KBM-7 (cell line): ENCODE measurements at regions of chr13 and their contacts with region 1.

Region 1: DNA sequence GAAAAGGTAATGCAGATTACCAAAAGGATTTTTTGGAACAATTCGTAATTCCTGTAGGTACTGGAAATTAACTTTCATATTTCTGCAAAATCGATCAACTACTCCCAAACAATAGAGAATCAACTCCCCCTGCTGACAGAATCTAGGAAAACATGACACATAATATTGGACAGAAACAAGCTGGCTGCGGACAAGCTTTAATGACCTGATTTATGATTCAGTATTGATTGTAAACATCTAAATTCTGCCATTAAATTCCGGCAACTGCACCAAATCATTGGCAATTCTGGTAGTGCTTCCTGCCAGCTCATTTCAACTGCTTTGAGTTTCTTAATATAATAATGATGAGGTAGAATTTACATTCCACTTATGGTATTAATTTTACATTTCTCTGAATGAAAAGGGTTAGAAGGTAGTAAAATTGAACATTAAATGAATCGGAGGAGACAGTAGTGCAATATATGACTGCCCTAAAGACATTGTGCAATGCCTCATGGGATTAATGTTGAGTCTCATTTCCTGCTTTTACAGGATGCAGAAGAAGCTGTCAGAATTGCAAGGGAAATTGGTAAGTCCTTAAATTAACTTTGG is 146.5 kb downstream of the PCCA start:
- DNase-seq: peak; percentile 59

Region 2: GRCh38 chr13:99916366-99917103 is 318.9 kb before region 1 on chr13:
- in situ Hi-C with region 1: loop called (anchors 25 kb)
- DNase-seq: peak; percentile 86

Region 3: DNA sequence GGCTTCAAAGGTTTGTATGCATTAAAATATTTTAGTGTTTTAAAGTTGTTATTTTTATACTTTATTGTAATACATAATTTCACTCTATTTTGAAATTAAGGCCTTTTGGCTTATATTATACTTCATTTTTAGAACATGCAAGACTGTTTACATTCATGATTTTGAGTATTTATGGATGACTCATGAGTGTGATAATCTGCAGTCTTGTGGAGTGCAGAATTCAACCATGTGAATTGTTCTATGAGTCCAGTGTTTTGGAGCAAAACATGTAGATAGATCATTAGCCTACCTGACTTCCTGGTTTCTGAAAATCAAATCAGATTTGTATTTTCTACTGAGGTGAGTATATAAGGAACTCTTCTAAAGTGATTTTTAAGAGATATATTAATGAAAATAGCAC is 95.3 kb after region 1 on chr13:
- in situ Hi-C with region 1: no loop called
- DNase-seq: no peak

Region 4: DNA sequence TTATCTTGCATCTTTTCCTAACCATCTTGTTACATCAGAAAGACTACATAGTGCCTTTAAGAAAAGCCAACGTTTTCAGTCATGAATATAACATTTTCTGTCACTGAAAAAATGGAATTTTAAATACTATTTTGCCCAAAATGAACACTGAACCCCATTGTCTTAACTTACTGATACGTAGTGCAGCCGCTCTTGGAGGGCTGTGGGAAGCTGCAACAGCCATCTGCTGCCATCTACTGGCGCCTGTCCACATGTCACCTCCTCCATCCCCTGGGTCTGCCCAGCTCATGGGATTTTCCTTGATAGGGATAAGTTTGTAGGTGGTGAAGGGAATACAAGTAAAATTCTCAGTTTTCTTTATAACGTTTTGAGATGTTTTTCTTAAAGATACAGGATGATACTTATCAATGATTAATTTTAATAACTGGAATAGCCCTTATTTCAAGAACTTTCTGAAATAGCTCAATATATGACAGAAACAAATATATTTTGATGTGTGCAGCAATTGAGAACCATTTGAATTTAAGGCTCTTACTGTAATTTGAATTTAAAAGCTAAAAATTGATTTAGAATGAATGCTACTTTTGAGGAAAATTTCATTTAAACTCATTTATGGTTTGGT is 279.5 kb after region 1 on chr13:
- in situ Hi-C with region 1: loop called (anchors 25 kb)
- DNase-seq: peak; percentile 82